ENCODE measurements at regions of chr1 and their contacts with region 1.

Region 1: DNA sequence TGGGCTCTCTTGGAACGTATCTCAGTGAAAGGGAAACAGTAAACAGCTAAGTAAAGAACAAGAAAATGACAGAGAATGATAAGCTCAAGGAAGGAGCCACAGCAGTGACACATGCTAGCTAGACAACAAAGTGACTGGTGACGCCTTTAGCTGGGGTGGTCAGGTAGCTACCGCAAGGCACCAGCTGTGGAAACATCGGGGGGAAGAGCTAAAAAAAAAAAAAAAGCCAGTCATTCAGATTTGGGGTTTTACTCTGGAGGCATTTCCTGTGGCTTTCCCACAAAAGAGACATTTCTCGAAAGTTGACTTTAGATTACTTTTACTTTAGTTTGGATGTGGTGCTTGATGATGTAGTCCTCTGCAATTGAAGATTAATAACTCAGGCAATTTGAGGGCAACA is 2.1 kb downstream of the FHAD1 start:
- DNase-seq: peak; percentile 71
- H3K4me3 Mint-ChIP-seq: peak overlapping the region; percentile 58
- H3K27ac Mint-ChIP-seq: peak overlapping the region; percentile 81
- H3K4me1 Mint-ChIP-seq: peaks cover 57% of the 10 kb centered on the region
- H3K27me3 Mint-ChIP-seq: peaks cover 58% of the 10 kb centered on the region

Region 2: GRCh38 chr1:15231714-15232201 is 17.3 kb before region 1 on chr1:
- intact Hi-C with region 1: loop called (anchors 1 kb)
- DNase-seq: no peak
- H3K4me3 Mint-ChIP-seq: no peak overlapping the region
- H3K27ac Mint-ChIP-seq: peak overlapping the region; percentile 38
- H3K4me1 Mint-ChIP-seq: peaks cover 27% of the 10 kb centered on the region
- H3K27me3 Mint-ChIP-seq: peaks cover 12% of the 10 kb centered on the region